CD8-positive, alpha-beta T cell (primary cell): ENCODE measurements at regions of chr14 and their contacts with region 1.

Region 1: GRCh38 chr14:22955702-22956569 is 954 bp downstream of the HAUS4 start:
- DNase-seq: no peak
- ATAC-seq: no peak
- H3K4me3 ChIP-seq: peak overlapping the region; percentile 79 to 95
- H3K4me3 Mint-ChIP-seq: peak overlapping the region; percentile 90
- H3K27ac ChIP-seq: peak overlapping the region; percentile 69 to 84
- H3K27ac Mint-ChIP-seq: peak overlapping the region; percentile 91
- H3K4me1 ChIP-seq: peaks cover 16% of the 10 kb centered on the region
- H3K4me1 Mint-ChIP-seq: peaks cover 16% of the 10 kb centered on the region
- H3K27me3 ChIP-seq: no peaks in the 10 kb centered on the region
- H3K27me3 Mint-ChIP-seq: no peaks in the 10 kb centered on the region
- CTCF ChIP-seq: no peak

Region 2: DNA sequence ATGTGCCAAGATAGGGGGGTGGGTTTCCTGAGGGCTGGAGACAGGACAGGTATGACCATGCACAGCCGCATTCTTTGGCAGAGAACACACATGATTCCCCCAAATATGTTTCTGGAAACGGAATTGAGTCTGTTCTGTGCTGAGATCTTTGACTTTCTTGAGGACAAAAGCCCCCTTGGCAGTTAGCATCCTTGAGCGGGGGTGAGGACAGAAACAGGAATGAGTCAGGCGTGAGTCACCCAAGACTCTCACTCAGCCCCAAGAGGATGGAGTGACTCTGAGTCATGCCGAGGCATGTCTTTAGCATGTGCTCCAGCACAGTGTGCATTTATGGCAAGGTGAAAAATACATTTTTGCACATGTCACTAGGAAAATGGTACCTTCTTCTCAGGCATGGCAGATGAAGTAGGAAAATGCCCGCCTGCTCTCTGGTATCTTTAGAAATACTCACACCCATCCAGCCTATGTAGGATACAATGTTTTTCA is 419.0 kb before region 1 on chr14:
- CTCF ChIA-PET with region 1: no interaction called
- POLR2A ChIA-PET with region 1: no interaction called
- intact Hi-C with region 1: no loop called
- DNase-seq: peak in 8 of 9 experiments; percentile 65 to 93 (median 82)
- ATAC-seq: peak; percentile 86
- H3K4me3 ChIP-seq: peak overlapping the region; percentile 38
- H3K4me3 Mint-ChIP-seq: peak overlapping the region; percentile 76
- H3K27ac ChIP-seq: peak overlapping the region; percentile 50 to 83
- H3K27ac Mint-ChIP-seq: peak overlapping the region; percentile 93
- H3K4me1 ChIP-seq: peaks cover 98% of the 10 kb centered on the region
- H3K4me1 Mint-ChIP-seq: peaks cover 96% of the 10 kb centered on the region
- H3K27me3 ChIP-seq: no peaks in the 10 kb centered on the region
- H3K27me3 Mint-ChIP-seq: no peaks in the 10 kb centered on the region
- CTCF ChIP-seq: no peak

Region 3: DNA sequence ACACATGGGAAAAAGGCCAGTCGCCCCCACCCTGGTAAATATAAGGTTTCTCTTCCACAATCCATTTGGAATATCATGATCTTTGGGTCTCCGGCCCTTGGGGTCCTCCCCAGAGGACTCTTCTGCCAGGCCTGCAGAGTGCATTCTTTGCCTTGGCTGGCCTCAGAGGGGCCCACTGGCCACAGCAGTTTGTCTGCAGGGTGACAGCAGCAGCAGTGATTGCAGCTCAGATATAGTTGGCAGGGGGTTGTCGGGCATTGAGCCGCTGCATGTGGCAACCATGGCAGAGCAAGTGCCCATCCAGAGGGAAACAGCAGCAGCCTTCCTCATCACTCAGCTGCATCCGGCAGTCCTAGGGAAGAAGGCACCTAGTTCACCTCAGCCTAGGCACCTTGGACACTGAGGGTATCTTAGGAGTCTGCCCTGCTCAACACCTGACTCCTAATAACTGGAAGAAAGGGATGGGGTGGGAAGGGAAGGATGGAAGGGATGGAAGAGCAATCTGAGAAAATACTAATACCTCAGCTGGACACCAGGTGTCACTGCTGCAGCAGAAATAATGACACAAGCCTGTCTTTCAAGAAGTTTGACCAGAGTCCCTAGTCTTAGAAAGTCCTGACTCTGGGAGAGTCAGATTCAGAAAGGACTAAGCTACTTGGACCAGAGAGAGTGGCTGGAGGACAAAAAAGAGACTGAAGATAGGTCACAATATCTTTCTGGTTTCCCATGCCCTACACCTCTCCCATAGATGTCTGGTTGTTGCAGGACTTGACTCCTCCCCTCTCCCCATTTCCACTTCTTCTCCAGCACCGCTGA is 17.5 kb after region 1 on chr14:
- CTCF ChIA-PET with region 1: interaction called, 62 read pairs
- POLR2A ChIA-PET with region 1: no interaction called
- intact Hi-C with region 1: no loop called
- DNase-seq: peak in 7 of 9 experiments; percentile 30 to 70 (median 45)
- ATAC-seq: peak; percentile 52
- H3K4me3 ChIP-seq: no peak overlapping the region
- H3K4me3 Mint-ChIP-seq: no peak overlapping the region
- H3K27ac ChIP-seq: no peak overlapping the region
- H3K27ac Mint-ChIP-seq: no peak overlapping the region
- H3K4me1 ChIP-seq: no peaks in the 10 kb centered on the region
- H3K4me1 Mint-ChIP-seq: no peaks in the 10 kb centered on the region
- H3K27me3 ChIP-seq: no peaks in the 10 kb centered on the region
- H3K27me3 Mint-ChIP-seq: peaks cover 2% of the 10 kb centered on the region
- CTCF ChIP-seq: peak; percentile 64